ENCODE measurements at regions of chr3 and their contacts with region 1.

Region 1: DNA sequence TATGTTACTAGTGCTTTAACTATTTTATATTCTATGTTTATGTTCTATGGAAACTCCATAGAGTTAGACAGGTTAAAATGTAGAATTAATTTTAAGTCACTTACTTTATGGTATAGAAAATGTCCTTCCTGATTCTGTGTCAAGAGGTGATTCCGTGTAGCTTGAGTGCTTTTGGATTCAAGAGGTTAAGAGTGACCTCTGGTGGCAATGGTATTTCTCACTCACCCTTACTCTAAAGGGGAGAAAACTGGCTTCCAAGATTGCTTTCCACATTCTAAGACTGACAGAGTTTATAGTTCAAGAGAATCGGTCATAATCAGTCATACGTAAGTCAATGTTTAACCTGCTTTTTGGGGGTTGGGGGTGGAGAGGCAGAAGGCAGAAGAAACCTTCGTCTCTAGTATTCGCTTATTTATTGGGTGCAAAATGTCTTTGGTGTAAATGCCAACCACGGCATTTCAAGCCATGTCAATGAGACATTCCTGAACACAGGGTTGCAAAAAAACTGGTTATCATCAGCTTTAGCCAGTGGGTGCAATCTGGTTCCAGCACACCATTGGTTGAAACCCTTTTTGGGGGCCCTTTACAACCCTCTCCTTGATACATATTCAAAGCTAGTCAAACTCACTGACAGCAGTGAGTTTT is 92.0 kb upstream of the VGLL3 start:
- DNase-seq: peak; percentile 56
- H3K4me3 ChIP-seq: no peak overlapping the region
- H3K27ac ChIP-seq: no peak overlapping the region
- H3K4me1 ChIP-seq: no peaks in the 10 kb centered on the region
- H3K27me3 ChIP-seq: no peaks in the 10 kb centered on the region
- CTCF ChIP-seq: peak; percentile 54 to 70

Region 2: GRCh38 chr3:86702381-86702958 is 380.4 kb before region 1 on chr3:
- CTCF ChIA-PET with region 1: no interaction called
- dilution Hi-C with region 1: no loop called
- in situ Hi-C with region 1: no loop called
- intact Hi-C with region 1: loop called (anchors 2 kb)
- DNase-seq: no peak
- H3K4me3 ChIP-seq: no peak overlapping the region
- H3K27ac ChIP-seq: no peak overlapping the region
- H3K4me1 ChIP-seq: no peaks in the 10 kb centered on the region
- H3K27me3 ChIP-seq: peaks cover 2% of the 10 kb centered on the region
- CTCF ChIP-seq: peak; percentile 35 to 45

Region 3: DNA sequence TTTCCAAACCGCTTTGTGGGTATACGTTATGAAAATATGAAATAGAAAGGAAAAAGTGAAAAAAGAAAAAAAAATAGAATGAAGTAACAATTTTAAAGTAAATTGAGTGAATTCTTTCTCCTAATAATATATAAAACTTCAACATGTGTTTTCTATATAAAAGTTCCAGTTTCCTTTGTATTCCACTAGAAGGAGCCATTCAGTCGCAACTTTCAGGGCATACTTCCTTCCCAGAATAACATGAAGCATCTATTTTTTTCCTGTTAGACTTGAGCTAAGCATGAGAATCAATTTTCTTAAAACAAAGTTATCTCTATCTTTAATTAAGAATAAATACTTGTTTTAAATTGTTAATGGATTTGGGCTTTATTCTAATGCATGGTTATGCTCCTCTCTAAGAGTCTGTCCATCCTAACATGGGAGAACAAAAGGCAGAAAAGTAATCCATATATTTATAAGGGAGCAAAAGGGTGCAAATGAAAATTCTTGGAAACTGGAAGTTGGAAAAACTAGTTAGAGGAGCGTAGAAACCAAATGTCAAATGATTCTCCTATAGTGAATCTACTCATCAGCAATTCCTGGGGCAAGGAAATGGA is 76.0 kb before region 1 on chr3:
- CTCF ChIA-PET with region 1: interaction called, 7 read pairs
- dilution Hi-C with region 1: no loop called
- in situ Hi-C with region 1: no loop called
- intact Hi-C with region 1: loop called (anchors 2 kb)
- DNase-seq: no peak
- H3K4me3 ChIP-seq: no peak overlapping the region
- H3K27ac ChIP-seq: no peak overlapping the region
- H3K4me1 ChIP-seq: no peaks in the 10 kb centered on the region
- H3K27me3 ChIP-seq: no peaks in the 10 kb centered on the region
- CTCF ChIP-seq: peak; percentile 26 to 49

Region 4: GRCh38 chr3:87167628-87168456 is 84.9 kb after region 1 on chr3:
- CTCF ChIA-PET with region 1: no interaction called
- dilution Hi-C with region 1: no loop called
- in situ Hi-C with region 1: no loop called
- intact Hi-C with region 1: loop called (anchors 5 kb)
- DNase-seq: peak; percentile 39
- H3K4me3 ChIP-seq: peak overlapping the region; percentile 28 to 47 (median 46)
- H3K27ac ChIP-seq: no peak overlapping the region
- H3K4me1 ChIP-seq: no peaks in the 10 kb centered on the region
- H3K27me3 ChIP-seq: no peaks in the 10 kb centered on the region
- CTCF ChIP-seq: peak; percentile 68 to 71